ENCODE measurements at regions of chr3 and their contacts with region 1.

Region 1: DNA sequence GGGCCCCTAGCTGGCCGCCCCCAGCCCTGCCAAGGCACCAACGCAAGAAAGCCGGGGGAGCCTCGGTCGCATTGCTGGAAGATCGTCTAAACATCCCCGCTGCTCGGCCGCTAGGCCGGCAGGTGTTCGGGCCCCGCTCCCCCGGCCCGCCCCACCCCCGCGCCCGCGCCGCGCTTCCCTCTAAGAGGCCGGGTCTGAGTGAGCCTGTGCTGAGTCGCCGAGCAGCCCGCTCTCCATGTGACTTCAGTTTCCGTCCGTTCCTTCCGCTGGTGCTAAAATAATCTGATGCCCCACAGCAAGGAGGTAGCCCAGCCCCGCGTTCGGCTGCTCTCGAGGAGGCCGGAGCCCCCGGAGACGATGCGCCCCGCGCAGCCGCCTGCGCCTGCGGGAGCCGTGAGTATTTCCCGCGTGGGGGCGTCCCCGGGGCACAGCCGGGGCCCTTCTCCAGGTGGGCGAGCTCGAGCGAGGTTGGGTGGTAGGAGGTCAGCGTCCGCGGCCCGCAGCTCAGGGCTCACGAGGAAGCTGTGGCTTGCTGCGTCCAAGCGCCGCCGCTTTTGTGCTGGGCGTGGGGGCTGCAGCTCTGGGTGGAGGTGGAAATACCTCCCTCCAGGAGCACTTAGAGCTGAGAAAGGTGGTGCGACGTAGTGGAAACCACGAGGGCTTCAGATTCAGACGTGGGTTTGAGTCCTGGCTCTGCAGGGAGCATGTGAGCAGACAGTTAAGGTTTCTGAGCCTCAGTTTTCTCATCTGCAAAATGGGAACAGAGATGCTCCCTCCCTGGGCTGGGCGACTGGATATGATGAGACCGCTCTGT is at the start of gene NRROS:
- DNase-seq: peak; percentile 91
- ATAC-seq: peak; percentile 48
- H3K4me3 ChIP-seq: peak within 1 kb of the TSS; percentile 80 to 88 (median 83)
- H3K4me3 Mint-ChIP-seq: peak within 1 kb of the TSS; percentile 89
- H3K27ac ChIP-seq: peak within 1 kb of the TSS; percentile 85 to 93
- H3K27ac Mint-ChIP-seq: peak within 1 kb of the TSS; percentile 99
- H3K4me1 ChIP-seq: peaks cover 58 to 71% of the 10 kb centered on the region in 2 donors
- H3K4me1 Mint-ChIP-seq: peaks cover 73% of the 10 kb centered on the region
- H3K27me3 ChIP-seq: no peaks in the 10 kb centered on the region
- H3K27me3 Mint-ChIP-seq: no peaks in the 10 kb centered on the region
- CTCF ChIP-seq: no peak
- total RNA-seq, gene NRROS: 85.9 and 87.9 TPM in 2 replicates

Region 2: DNA sequence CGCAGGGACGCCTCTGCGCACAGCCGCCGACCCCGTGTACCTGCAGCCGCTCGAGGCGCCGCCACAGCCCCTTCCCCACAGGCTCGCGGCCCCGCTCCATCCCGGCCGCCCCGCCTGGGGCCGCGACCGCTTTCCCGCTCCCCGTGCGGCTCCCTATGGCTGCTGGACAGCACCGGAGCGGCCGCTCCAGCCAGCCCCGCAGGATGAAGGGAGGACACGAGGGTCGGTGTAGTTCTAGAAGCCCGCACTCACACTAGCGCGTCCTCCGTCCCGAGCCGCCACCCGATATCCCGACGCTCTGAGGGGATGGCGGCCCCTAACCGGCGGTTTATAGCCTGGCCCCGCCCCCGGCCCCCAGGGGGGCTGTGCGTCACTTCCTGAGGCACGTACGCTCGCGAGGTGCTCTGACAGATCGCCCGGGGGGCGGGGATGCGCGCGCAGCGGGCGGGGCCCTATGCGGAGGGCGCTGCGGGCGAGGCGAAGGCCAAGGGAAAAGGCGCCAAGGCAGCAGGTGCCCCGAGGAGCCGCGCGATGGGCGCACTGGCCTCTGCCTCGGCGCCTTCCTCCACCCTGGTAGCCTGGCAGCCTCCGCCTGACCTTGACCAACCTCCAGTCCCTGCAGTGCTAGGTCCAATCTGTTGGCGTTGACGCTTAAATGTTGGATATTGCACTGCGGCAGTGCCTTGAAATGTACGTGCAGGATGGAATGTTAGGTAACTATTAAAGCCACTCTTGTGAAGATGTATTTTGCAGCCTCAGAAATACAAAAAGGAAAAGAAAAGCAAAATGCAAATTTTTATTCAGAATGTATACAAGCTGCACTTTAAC is 557.7 kb before region 1 on chr3 and contains the start of gene TFRC:
- CTCF ChIA-PET with region 1: no interaction called
- POLR2A ChIA-PET with region 1: no interaction called
- intact Hi-C with region 1: loop called (anchors 5 kb)
- DNase-seq: peak; percentile 97
- ATAC-seq: peak; percentile 93
- H3K4me3 ChIP-seq: peak within 1 kb of the TSS; percentile 79 to 99 (median 86)
- H3K4me3 Mint-ChIP-seq: peak within 1 kb of the TSS; percentile 93
- H3K27ac ChIP-seq: peak within 1 kb of the TSS; percentile 84 to 97
- H3K27ac Mint-ChIP-seq: peak within 1 kb of the TSS; percentile 96
- H3K4me1 ChIP-seq: peaks cover 25 to 42% of the 10 kb centered on the region in 2 donors
- H3K4me1 Mint-ChIP-seq: peaks cover 44% of the 10 kb centered on the region
- H3K27me3 ChIP-seq: no peaks in the 10 kb centered on the region
- H3K27me3 Mint-ChIP-seq: no peaks in the 10 kb centered on the region
- CTCF ChIP-seq: no peak
- total RNA-seq, gene TFRC: 104 and 117 TPM in 2 replicates

Region 3: DNA sequence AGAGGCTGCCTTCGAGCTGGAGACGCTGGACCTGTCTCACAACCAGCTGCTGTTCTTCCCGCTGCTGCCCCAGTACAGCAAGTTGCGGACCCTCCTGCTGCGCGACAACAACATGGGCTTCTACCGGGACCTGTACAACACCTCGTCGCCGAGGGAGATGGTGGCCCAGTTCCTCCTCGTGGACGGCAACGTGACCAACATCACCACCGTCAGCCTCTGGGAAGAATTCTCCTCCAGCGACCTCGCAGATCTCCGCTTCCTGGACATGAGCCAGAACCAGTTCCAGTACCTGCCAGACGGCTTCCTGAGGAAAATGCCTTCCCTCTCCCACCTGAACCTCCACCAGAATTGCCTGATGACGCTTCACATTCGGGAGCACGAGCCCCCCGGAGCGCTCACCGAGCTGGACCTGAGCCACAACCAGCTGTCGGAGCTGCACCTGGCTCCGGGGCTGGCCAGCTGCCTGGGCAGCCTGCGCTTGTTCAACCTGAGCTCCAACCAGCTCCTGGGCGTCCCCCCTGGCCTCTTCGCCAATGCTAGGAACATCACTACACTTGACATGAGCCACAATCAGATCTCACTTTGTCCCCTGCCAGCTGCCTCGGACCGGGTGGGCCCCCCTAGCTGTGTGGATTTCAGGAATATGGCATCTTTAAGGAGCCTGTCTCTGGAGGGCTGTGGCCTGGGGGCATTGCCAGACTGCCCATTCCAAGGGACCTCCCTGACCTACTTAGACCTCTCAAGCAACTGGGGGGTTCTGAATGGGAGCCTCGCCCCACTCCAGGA is 20.9 kb after region 1 on chr3:
- CTCF ChIA-PET with region 1: interaction called, 4 read pairs
- POLR2A ChIA-PET with region 1: interaction called, 13 read pairs
- intact Hi-C with region 1: no loop called
- DNase-seq: no peak
- ATAC-seq: no peak
- H3K4me3 ChIP-seq: no peak overlapping the region
- H3K4me3 Mint-ChIP-seq: no peak overlapping the region
- H3K27ac ChIP-seq: no peak overlapping the region
- H3K27ac Mint-ChIP-seq: no peak overlapping the region
- H3K4me1 ChIP-seq: no peaks in the 10 kb centered on the region
- H3K4me1 Mint-ChIP-seq: no peaks in the 10 kb centered on the region
- H3K27me3 ChIP-seq: no peaks in the 10 kb centered on the region
- H3K27me3 Mint-ChIP-seq: no peaks in the 10 kb centered on the region
- CTCF ChIP-seq: no peak

Region 4: GRCh38 chr3:196684548-196685407 is 45.1 kb after region 1 on chr3:
- CTCF ChIA-PET with region 1: interaction called, 22 read pairs
- POLR2A ChIA-PET with region 1: no interaction called
- intact Hi-C with region 1: loop called (anchors 1 kb)
- DNase-seq: peak; percentile 87
- ATAC-seq: peak; percentile 92
- H3K4me3 ChIP-seq: peak overlapping the region in 2 of 5 experiments; percentile 34 to 37
- H3K4me3 Mint-ChIP-seq: peak overlapping the region; percentile 57
- H3K27ac ChIP-seq: peak overlapping the region in 1 of 2 donors; percentile 34
- H3K27ac Mint-ChIP-seq: peak overlapping the region; percentile 28
- H3K4me1 ChIP-seq: peaks cover 21 to 26% of the 10 kb centered on the region in 2 donors
- H3K4me1 Mint-ChIP-seq: peaks cover 25% of the 10 kb centered on the region
- H3K27me3 ChIP-seq: no peaks in the 10 kb centered on the region
- H3K27me3 Mint-ChIP-seq: no peaks in the 10 kb centered on the region
- CTCF ChIP-seq: peak; percentile 87

Region 5: GRCh38 chr3:196726788-196727675 is 87.3 kb after region 1 on chr3:
- CTCF ChIA-PET with region 1: no interaction called
- POLR2A ChIA-PET with region 1: no interaction called
- intact Hi-C with region 1: no loop called
- DNase-seq: no peak
- ATAC-seq: no peak
- H3K4me3 ChIP-seq: no peak overlapping the region
- H3K4me3 Mint-ChIP-seq: no peak overlapping the region
- H3K27ac ChIP-seq: no peak overlapping the region
- H3K27ac Mint-ChIP-seq: no peak overlapping the region
- H3K4me1 ChIP-seq: no peaks in the 10 kb centered on the region
- H3K4me1 Mint-ChIP-seq: no peaks in the 10 kb centered on the region
- H3K27me3 ChIP-seq: no peaks in the 10 kb centered on the region
- H3K27me3 Mint-ChIP-seq: no peaks in the 10 kb centered on the region
- CTCF ChIP-seq: no peak

Region 6: GRCh38 chr3:196942226-196942914 is 302.7 kb after region 1 on chr3 and contains the start of gene NCBP2:
- CTCF ChIA-PET with region 1: interaction called, 3 read pairs
- POLR2A ChIA-PET with region 1: no interaction called
- intact Hi-C with region 1: loop called (anchors 2 kb)
- DNase-seq: peak; percentile 99
- ATAC-seq: peak; percentile 91
- H3K4me3 ChIP-seq: peak within 1 kb of the TSS; percentile 83 to 99 (median 92)
- H3K4me3 Mint-ChIP-seq: peak within 1 kb of the TSS; percentile 98
- H3K27ac ChIP-seq: peak within 1 kb of the TSS; percentile 92 to 97
- H3K27ac Mint-ChIP-seq: peak within 1 kb of the TSS; percentile 99
- H3K4me1 ChIP-seq: peaks cover 29 to 35% of the 10 kb centered on the region in 2 donors
- H3K4me1 Mint-ChIP-seq: peaks cover 50% of the 10 kb centered on the region
- H3K27me3 ChIP-seq: no peaks in the 10 kb centered on the region
- H3K27me3 Mint-ChIP-seq: no peaks in the 10 kb centered on the region
- CTCF ChIP-seq: peak; percentile 77
- total RNA-seq, gene NCBP2: 93.4 and 95.0 TPM in 2 replicates